Mammary epithelial cell (primary cell): ENCODE measurements at regions of chr4 and their contacts with region 1.

Region 1: GRCh38 chr4:7462509-7462971 is 27.8 kb upstream of the PSAPL1 start:
- DNase-seq: peak; percentile 38
- H3K4me3 ChIP-seq: no peak overlapping the region
- H3K27ac ChIP-seq: no peak overlapping the region
- H3K4me1 ChIP-seq: no peaks in the 10 kb centered on the region
- H3K27me3 ChIP-seq: no peaks in the 10 kb centered on the region
- CTCF ChIP-seq: peak in 1 of 2 donors; percentile 42

Region 2: DNA sequence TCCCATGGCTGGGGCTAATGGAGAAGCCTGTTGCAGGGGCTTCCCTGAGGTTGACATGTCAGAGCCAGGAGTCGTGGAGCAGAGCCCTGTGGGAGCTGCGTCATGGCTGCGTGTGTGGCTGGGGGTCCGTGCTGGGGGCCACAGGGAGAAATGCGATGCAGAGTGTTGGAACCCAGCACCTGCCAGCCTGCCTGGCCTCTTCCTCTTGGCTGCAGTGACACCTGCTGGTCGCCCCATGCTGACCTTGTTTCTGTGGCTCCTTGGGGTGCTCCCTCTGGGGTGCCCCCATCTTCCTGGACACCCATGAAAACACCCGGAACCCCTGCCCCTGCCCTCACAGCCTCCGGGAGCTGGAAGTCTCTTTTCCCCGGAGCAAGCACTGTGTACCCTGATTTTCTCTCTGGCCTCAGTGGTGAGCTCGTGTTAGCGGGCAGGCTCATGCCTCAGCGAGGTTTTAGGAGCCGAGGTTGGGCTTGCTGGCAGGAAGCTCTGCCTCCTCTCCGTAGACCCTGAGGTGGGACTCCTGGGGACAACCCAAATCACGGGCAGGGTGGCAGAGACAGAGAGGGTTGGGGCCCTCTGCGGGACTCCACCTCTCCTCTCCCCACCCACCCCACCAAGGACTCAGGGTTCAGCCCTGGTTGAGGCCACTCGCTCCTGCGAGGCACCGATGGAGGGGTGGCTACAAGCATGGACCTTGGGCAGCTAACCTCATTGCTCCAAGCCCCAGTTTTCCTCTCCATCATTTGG is 166.5 kb before region 1 on chr4:
- CTCF ChIA-PET with region 1: no interaction called
- dilution Hi-C with region 1: no loop called
- in situ Hi-C with region 1: no loop called
- intact Hi-C with region 1: loop called (anchors 2 kb)
- DNase-seq: peak; percentile 19
- H3K4me3 ChIP-seq: no peak overlapping the region
- H3K27ac ChIP-seq: no peak overlapping the region
- H3K4me1 ChIP-seq: no peaks in the 10 kb centered on the region
- H3K27me3 ChIP-seq: no peaks in the 10 kb centered on the region
- CTCF ChIP-seq: peak; percentile 54 to 80

Region 3: GRCh38 chr4:7358100-7358735 is 104.3 kb before region 1 on chr4:
- CTCF ChIA-PET with region 1: interaction called, 6 read pairs
- dilution Hi-C with region 1: no loop called
- in situ Hi-C with region 1: no loop called
- intact Hi-C with region 1: loop called (anchors 5 kb)
- DNase-seq: peak; percentile 78
- H3K4me3 ChIP-seq: no peak overlapping the region
- H3K27ac ChIP-seq: no peak overlapping the region
- H3K4me1 ChIP-seq: no peaks in the 10 kb centered on the region
- H3K27me3 ChIP-seq: no peaks in the 10 kb centered on the region
- CTCF ChIP-seq: no peak

Region 4: DNA sequence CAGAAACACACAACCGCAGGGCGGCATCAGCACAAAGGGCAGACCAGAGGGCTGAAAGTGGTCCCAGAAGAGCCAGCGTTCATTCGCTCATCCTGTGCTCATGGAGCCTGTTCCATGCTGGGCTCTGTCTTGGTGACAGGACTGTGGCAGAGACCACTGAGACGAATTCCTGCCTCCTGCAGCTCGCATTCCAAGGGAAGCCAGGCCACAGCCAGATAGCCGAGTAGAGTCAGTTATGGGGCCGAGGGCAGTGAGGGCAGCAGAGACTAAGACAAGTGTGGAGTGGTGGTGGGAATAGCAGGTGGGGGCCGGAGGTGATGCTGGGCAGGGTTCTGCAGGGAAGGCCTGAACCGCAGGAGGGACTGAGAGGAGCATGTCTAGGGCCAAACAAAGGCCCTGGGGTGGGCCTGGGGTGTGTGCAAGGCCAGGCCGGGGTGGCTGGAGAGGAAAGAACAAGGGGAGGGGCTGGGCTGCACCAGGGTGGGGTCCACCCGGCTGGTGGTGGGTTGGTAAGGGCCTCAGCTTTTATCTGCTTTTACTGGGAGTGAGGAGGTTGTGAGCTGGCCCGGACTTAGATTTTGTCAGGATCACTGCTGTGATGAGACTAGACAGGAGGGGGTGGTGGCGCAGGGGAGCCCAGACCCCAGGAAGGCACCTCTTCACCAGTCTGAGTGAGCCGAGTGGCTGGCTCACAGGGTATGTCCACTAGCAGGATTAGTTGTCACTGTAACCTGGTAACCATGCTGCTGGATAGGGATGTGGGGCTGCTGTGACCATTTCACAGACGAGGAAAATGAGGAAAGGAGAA is 34.1 kb before region 1 on chr4:
- CTCF ChIA-PET with region 1: no interaction called
- dilution Hi-C with region 1: loop called (anchors 5 kb)
- in situ Hi-C with region 1: no loop called
- intact Hi-C with region 1: no loop called
- DNase-seq: no peak
- H3K4me3 ChIP-seq: no peak overlapping the region
- H3K27ac ChIP-seq: no peak overlapping the region
- H3K4me1 ChIP-seq: peaks cover 33% of the 10 kb centered on the region
- H3K27me3 ChIP-seq: no peaks in the 10 kb centered on the region
- CTCF ChIP-seq: no peak

Region 5: GRCh38 chr4:7499661-7500060 is 37.1 kb after region 1 on chr4:
- CTCF ChIA-PET with region 1: no interaction called
- dilution Hi-C with region 1: no loop called
- in situ Hi-C with region 1: no loop called
- intact Hi-C with region 1: no loop called
- DNase-seq: no peak
- H3K4me3 ChIP-seq: no peak overlapping the region
- H3K27ac ChIP-seq: no peak overlapping the region
- H3K4me1 ChIP-seq: no peaks in the 10 kb centered on the region
- H3K27me3 ChIP-seq: no peaks in the 10 kb centered on the region
- CTCF ChIP-seq: no peak

Region 6: GRCh38 chr4:7630568-7631287 is 168.2 kb after region 1 on chr4:
- CTCF ChIA-PET with region 1: no interaction called
- dilution Hi-C with region 1: no loop called
- in situ Hi-C with region 1: no loop called
- intact Hi-C with region 1: loop called (anchors 1 kb)
- DNase-seq: peak; percentile 83
- H3K4me3 ChIP-seq: no peak overlapping the region
- H3K27ac ChIP-seq: no peak overlapping the region
- H3K4me1 ChIP-seq: peaks cover 18% of the 10 kb centered on the region
- H3K27me3 ChIP-seq: no peaks in the 10 kb centered on the region
- CTCF ChIP-seq: peak in 1 of 2 donors; percentile 16

Region 7: GRCh38 chr4:7691982-7692381 is 229.4 kb after region 1 on chr4:
- CTCF ChIA-PET with region 1: no interaction called
- dilution Hi-C with region 1: loop called (anchors 5 kb)
- in situ Hi-C with region 1: no loop called
- intact Hi-C with region 1: no loop called
- DNase-seq: no peak
- H3K4me3 ChIP-seq: no peak overlapping the region
- H3K27ac ChIP-seq: no peak overlapping the region
- H3K4me1 ChIP-seq: no peaks in the 10 kb centered on the region
- H3K27me3 ChIP-seq: no peaks in the 10 kb centered on the region
- CTCF ChIP-seq: no peak

Region 8: GRCh38 chr4:7802093-7802726 is 339.7 kb after region 1 on chr4:
- CTCF ChIA-PET with region 1: no interaction called
- dilution Hi-C with region 1: no loop called
- in situ Hi-C with region 1: no loop called
- intact Hi-C with region 1: loop called (anchors 2 kb)
- DNase-seq: peak; percentile 60
- H3K4me3 ChIP-seq: no peak overlapping the region
- H3K27ac ChIP-seq: no peak overlapping the region
- H3K4me1 ChIP-seq: peaks cover 22% of the 10 kb centered on the region
- H3K27me3 ChIP-seq: no peaks in the 10 kb centered on the region
- CTCF ChIP-seq: peak; percentile 87